ENCODE measurements at regions of chr11 and their contacts with region 1.

Region 1: GRCh38 chr11:15159085-15159484 is 44.4 kb downstream of the INSC start:
- DNase-seq: no peak
- ATAC-seq: no peak
- H3K4me3 ChIP-seq: no peak overlapping the region
- H3K4me3 Mint-ChIP-seq: no peak overlapping the region
- H3K27ac ChIP-seq: no peak overlapping the region
- H3K27ac Mint-ChIP-seq: no peak overlapping the region
- H3K4me1 ChIP-seq: no peaks in the 10 kb centered on the region
- H3K4me1 Mint-ChIP-seq: no peaks in the 10 kb centered on the region
- H3K27me3 ChIP-seq: no peaks in the 10 kb centered on the region
- H3K27me3 Mint-ChIP-seq: peaks cover 0 to 29% (median 5%) of the 10 kb centered on the region in 5 donors

Region 2: DNA sequence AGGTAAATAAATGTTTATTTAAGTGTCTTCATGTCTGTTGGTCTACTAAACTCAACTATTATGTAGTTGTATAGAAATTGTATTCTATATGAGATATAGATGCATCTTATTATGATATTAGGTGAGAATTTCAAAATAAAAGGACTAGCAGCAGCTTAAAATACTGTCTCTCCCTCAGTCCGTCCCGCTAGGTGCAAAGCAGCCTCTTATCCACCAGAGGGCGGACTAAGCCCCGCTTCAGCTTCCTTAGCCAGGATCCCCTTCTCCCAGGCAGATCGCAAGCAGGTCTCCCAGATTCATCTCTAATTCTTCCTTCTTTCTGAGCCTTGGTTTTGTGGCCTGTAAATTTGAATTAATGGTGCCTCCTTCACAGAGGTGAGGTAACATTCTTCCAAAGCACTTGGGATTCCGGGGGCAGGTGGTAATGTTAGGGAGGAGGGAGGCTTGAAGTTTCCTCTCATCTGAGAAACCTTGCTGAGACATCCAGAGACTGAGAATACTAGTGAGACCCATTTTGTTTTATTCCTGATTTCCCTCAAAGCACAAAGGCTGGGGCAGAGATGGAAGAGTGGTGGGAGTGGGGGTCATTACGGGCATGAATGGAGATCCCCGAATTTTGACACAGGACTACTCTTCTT is 57.9 kb before region 1 on chr11:
- CTCF ChIA-PET with region 1: interaction called, 4 read pairs
- POLR2A ChIA-PET with region 1: no interaction called
- intact Hi-C with region 1: loop called in 1 of 2 experiments (anchors 1 kb)
- DNase-seq: peak in 6 of 9 donors; percentile 11 to 43 (median 22)
- ATAC-seq: peak; percentile 74
- H3K4me3 ChIP-seq: no peak overlapping the region
- H3K4me3 Mint-ChIP-seq: no peak overlapping the region
- H3K27ac ChIP-seq: no peak overlapping the region
- H3K27ac Mint-ChIP-seq: no peak overlapping the region
- H3K4me1 ChIP-seq: no peaks in the 10 kb centered on the region
- H3K4me1 Mint-ChIP-seq: peaks cover 0 to 3% (median 0%) of the 10 kb centered on the region in 7 donors
- H3K27me3 ChIP-seq: no peaks in the 10 kb centered on the region
- H3K27me3 Mint-ChIP-seq: peaks cover 15 to 38% (median 29%) of the 10 kb centered on the region in 5 donors

Region 3: DNA sequence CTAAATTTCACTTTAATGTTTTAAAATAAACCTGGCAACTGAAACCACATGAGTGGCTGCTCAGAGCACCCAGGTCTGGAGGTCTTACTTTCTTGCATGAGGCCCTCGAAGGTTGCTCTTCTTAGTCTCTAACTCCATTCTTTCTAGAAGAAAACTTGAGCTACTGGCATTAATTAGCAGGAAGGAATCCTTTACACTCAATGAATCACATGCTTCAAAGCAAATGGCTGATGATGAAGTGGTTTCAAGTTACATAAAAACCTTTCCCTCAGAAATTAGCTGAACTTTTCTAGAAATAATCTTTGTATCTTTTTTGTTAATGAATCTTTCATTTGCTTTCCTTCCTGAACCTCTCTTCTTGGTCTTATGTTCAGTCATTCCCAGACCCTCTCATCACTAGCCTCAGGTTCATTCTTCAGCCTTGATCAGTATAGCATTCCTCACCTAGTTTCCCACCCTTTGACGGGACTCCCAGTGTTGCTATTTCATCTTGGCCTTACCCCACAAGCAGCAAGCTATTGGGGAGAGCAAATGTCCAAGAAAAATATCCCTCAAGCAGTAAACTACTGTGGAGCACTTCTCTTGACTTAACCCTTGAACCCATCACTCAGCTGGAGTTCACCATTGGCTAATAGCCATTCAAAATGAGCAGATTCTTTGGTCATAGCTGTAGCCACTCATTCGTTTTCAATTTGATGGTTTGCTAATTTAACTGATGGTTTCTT is 30.7 kb after region 1 on chr11:
- CTCF ChIA-PET with region 1: no interaction called
- POLR2A ChIA-PET with region 1: no interaction called
- intact Hi-C with region 1: no loop called
- DNase-seq: no peak
- ATAC-seq: no peak
- H3K4me3 ChIP-seq: no peak overlapping the region
- H3K4me3 Mint-ChIP-seq: no peak overlapping the region
- H3K27ac ChIP-seq: no peak overlapping the region
- H3K27ac Mint-ChIP-seq: no peak overlapping the region
- H3K4me1 ChIP-seq: no peaks in the 10 kb centered on the region
- H3K4me1 Mint-ChIP-seq: no peaks in the 10 kb centered on the region
- H3K27me3 ChIP-seq: no peaks in the 10 kb centered on the region
- H3K27me3 Mint-ChIP-seq: peaks cover 0 to 19% (median 7%) of the 10 kb centered on the region in 5 donors

Measured in naive thymus-derived CD4-positive, alpha-beta T cell (primary cell).